Vagina (tissue), 2 donors: ENCODE measurements at regions of chr9 and their contacts with region 1.

Region 1: DNA sequence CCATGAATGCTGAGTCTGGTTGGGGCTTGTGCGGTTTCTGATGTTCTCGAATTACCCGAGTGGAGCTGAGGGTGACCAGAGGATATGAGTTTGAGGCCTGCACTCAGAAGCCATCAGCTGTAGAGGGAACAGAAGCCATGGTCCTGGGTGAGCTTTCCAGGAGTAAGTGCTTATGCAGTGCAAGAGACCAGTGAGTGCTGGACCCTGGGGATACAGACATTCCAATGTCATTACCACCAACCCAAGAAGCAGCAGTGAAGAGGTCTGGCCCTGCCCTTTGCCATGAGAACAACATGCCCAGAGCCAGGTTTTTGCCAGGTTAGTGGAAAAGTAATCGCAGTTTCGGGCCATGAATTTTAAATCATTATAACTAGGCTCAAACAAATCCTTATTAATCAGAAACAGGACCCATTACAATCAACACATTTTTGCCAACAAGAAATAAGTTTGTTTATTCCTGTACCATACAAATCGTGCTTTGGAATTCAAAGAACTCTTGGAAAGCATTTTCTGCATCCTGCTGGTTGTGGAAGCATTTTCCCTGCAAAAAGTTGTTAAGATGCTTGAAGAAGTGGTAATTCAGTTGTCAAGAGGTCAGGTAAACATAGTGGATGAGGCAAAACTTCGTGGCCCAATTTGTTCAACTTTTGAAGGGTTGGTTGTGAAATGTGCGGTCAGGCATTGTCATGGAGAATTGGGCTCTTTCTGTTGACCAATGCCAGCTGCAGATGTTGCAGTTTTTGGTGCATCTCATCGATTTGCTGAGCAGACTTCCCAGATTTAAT is 154.6 kb downstream of the SYK start:
- DNase-seq: no peak
- H3K4me3 ChIP-seq: no peak overlapping the region
- H3K27ac ChIP-seq: no peak overlapping the region
- H3K4me1 ChIP-seq: peaks cover 5% of the 10 kb centered on the region
- H3K27me3 ChIP-seq: no peaks in the 10 kb centered on the region
- CTCF ChIP-seq: no peak
- POLR2A ChIP-seq: no peak

Region 2: DNA sequence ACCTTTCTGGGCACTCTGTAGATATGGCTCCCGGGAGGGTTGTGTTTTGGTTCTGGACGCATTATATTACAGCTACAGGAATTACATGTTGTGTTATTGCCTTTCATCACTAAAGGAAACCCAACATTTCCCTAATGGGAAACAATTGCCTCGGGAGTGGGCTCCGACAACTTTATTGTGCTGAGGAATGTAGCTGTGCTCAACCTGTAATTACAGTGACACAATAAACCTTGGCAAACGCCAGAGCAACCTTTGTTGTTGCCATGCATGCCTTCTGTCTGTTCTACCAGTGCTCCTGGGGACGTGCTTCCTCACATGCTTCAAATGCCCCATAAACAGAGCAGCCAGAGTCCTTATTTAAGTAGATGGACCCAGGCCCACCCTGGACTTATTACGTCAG is 496.0 kb before region 1 on chr9:
- intact Hi-C with region 1: loop called (anchors 10 kb)
- DNase-seq: no peak
- H3K4me3 ChIP-seq: no peak overlapping the region
- H3K27ac ChIP-seq: no peak overlapping the region
- H3K4me1 ChIP-seq: no peaks in the 10 kb centered on the region
- H3K27me3 ChIP-seq: no peaks in the 10 kb centered on the region
- CTCF ChIP-seq: no peak
- POLR2A ChIP-seq: no peak

Region 3: GRCh38 chr9:90611568-90611967 is 344.6 kb before region 1 on chr9:
- intact Hi-C with region 1: loop called (anchors 5 kb)
- DNase-seq: no peak
- H3K4me3 ChIP-seq: no peak overlapping the region
- H3K27ac ChIP-seq: no peak overlapping the region
- H3K4me1 ChIP-seq: no peaks in the 10 kb centered on the region
- H3K27me3 ChIP-seq: no peaks in the 10 kb centered on the region
- CTCF ChIP-seq: no peak
- POLR2A ChIP-seq: no peak